ENCODE measurements at regions of chr16 and their contacts with region 1.

Region 1: DNA sequence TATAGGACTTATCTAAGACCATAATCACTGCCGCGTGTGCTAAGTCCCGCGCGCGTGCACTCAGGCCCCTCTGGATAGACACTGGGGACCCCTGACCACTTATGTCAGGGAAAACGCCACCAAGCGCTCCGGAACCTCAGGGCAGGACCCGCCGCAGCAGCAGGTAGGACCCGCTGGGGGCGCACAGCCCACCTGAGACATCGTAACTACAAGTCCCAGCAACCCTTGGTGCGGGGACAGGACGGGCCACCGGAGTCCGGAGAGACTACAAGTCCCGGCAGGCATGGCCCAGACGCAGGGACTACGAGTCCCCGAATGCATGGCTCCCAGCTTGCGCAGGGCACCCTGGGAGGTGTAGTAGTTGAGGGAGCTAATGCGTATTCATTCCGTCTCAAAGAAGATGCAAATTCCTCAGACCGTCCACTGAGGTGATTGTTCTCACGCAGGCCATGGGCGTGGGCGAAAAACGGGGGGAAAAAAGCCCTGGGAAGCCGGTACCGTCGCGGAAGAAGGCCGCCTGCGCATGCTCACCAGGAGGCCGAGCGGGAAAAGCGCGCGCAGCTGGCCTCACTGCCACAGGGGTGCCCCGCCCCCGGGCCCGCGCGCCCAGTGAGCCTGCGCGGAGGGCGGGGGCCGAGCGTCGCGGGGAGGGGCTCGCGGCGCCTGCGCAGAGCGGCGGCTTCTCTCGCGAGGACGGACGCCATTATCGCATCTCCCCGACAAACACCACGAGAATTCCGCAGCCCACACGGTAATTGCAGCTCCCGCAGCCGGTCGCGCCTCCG is at the start of gene BANP:
- DNase-seq: peak; percentile 95
- ATAC-seq: peak; percentile 93
- H3K4me3 Mint-ChIP-seq: peak within 1 kb of the TSS; percentile 97
- H3K27ac Mint-ChIP-seq: peak within 1 kb of the TSS; percentile 100
- H3K4me1 Mint-ChIP-seq: peaks cover 69% of the 10 kb centered on the region
- H3K27me3 Mint-ChIP-seq: no peaks in the 10 kb centered on the region
- CTCF ChIP-seq: no peak
- total RNA-seq, gene BANP: 62.8 and 72.3 TPM in 2 replicates

Region 2: DNA sequence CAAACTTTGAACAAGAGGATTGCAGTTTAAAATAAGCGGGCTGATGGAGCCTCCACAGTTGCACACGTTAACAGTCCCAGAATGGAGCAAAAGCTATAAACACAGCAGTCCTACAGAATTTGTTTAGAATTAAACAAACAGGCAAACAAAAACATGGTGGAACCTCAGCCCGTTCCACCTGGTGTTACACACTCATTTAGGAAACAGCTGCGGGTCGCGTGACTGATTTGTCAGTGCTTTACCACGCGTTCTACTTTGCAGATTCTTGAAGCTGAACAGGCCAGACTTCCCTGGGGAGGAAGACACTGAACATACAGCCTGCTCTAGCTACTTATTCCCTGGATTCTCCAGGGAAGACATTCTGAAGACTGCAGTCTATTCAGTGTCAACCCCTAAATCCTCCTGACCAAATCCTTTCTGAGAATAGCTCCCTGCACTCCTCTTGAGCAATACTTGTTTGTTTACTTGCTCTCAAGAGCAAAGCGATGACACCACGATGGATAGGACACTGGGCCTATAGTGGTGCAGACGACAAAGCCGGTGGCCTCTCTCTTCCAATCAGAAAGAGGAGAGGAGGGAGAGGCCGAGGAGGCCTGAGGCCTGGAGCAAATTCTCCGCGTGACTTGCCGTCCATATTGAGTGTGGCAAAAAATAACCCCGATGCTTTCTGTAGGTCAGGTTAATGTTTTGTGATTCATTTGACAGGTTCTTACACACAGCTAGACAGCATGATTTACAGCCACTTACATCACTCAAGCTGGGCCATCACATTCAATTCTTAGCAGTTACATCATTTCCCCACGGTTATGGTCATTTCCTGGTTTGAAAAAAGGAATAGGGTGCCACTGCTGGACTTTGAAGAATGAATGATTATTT is 562.8 kb before region 1 on chr16:
- CTCF ChIA-PET with region 1: no interaction called
- POLR2A ChIA-PET with region 1: no interaction called
- intact Hi-C with region 1: loop called (anchors 1 kb)
- DNase-seq: peak; percentile 59
- ATAC-seq: peak; percentile 62
- H3K4me3 Mint-ChIP-seq: peak overlapping the region; percentile 70
- H3K27ac Mint-ChIP-seq: peak overlapping the region; percentile 98
- H3K4me1 Mint-ChIP-seq: peaks cover 52% of the 10 kb centered on the region
- H3K27me3 Mint-ChIP-seq: peaks cover 2% of the 10 kb centered on the region
- CTCF ChIP-seq: no peak

Region 3: DNA sequence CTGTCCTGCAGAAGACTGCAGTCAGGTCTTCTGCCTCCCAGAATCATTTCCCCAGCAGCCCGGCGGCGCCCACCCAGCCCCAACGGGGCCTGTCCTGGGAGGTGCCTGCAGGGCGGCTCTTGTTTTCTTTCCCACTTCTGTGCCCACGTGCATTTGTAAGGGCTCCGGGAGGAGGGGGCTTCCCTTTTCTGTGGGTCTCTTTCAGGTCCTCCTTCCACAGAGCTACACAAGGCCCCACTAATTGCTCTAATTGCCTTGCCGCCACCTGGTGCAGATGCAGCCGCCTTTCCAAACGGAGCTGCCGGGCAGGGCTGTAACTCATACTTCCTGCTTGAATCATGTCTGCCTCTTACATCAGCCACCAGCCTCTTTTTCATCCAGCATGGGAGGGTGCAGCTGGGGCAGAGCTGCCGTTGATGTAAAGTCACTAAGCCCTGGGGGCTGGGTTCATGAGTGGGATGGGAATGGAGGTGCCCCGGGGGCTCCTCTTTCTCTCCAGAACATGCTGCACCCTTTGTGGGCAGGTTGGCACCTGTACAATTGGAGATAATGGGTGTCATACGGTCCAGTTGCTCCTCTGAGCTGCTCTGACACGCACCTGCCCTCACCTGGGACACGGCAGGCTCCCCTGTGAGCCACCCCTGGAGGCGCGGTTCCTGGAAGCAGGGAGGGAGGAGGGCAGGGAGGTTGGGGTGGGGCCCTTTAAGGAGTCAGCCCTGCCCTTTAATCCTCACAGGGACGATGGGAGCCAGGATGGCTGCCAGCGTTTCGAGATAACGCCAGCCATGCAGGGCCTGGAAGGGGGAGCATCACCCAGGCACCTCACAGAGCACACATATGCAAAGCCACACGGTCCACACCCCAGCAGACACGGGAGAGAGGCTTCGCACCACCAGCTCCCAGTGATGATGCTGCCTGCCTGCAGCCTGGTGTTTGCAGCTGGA is 144.1 kb before region 1 on chr16:
- CTCF ChIA-PET with region 1: no interaction called
- POLR2A ChIA-PET with region 1: interaction called, 14 read pairs
- intact Hi-C with region 1: loop called (anchors 1 kb)
- DNase-seq: peak; percentile 55
- ATAC-seq: peak; percentile 43
- H3K4me3 Mint-ChIP-seq: peak overlapping the region; percentile 75
- H3K27ac Mint-ChIP-seq: peak overlapping the region; percentile 95
- H3K4me1 Mint-ChIP-seq: peaks cover 74% of the 10 kb centered on the region
- H3K27me3 Mint-ChIP-seq: no peaks in the 10 kb centered on the region
- CTCF ChIP-seq: no peak

Region 4: DNA sequence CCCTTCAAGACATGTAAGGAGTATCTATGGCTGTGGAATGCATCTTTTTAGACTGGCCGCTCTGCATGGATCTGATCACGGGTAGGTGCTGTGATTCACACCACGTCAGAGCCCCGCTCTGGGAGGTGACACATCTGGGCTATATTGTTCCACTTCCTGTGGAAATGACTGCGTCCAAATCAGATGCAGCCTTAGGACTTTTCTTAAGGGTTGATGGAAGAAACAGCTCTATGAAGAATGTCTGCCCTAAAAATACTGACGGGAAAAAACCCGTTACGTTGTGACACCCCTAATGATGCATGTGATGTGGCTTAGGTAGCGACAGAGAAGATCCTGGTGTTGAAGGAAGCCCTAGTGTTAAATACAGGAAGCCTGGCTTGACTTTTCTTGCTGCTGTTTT is 12.4 kb after region 1 on chr16:
- CTCF ChIA-PET with region 1: no interaction called
- POLR2A ChIA-PET with region 1: interaction called, 8 read pairs
- intact Hi-C with region 1: loop called (anchors 1 kb)
- DNase-seq: no peak
- ATAC-seq: peak; percentile 73
- H3K4me3 Mint-ChIP-seq: peak overlapping the region; percentile 32
- H3K27ac Mint-ChIP-seq: peak overlapping the region; percentile 79
- H3K4me1 Mint-ChIP-seq: peaks cover 79% of the 10 kb centered on the region
- H3K27me3 Mint-ChIP-seq: no peaks in the 10 kb centered on the region
- CTCF ChIP-seq: no peak

Region 5: GRCh38 chr16:88452482-88453216 is 501.7 kb after region 1 on chr16:
- CTCF ChIA-PET with region 1: no interaction called
- POLR2A ChIA-PET with region 1: interaction called, 5 read pairs
- intact Hi-C with region 1: loop called (anchors 1 kb)
- DNase-seq: peak; percentile 100
- ATAC-seq: peak; percentile 71
- H3K4me3 Mint-ChIP-seq: peak overlapping the region; percentile 87
- H3K27ac Mint-ChIP-seq: peak overlapping the region; percentile 80
- H3K4me1 Mint-ChIP-seq: peaks cover 57% of the 10 kb centered on the region
- H3K27me3 Mint-ChIP-seq: no peaks in the 10 kb centered on the region
- CTCF ChIP-seq: no peak

Region 6: DNA sequence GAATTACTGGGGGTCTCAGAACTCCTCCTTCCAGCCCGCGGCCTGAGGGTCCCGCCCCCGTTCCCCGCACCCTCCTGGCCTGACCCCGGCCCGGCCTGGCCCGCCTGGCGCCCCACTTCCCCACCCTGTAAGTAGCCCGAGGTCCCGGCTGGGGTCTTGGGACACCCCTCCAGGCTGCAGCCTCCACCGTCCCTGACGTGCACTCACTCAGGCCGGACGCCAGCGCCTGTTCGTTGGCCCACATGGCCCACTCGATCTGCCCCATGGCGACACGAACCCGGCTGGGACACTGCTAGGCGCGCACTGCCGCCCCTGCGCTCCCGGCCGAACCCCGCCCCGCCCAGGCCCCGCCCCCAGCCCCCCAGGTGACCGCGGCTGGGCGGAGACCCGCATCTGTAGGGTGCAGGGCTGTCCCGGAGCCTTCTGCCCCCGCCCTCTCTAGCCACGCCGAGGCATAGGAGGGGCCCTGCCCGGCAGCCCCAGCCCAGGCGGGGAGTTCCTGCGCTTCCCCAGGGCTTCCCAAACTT is 699.9 kb after region 1 on chr16 and contains the start of gene CYBA:
- CTCF ChIA-PET with region 1: no interaction called
- POLR2A ChIA-PET with region 1: no interaction called
- intact Hi-C with region 1: loop called (anchors 2 kb)
- DNase-seq: no peak
- ATAC-seq: peak; percentile 81
- H3K4me3 Mint-ChIP-seq: peak within 1 kb of the TSS; percentile 93
- H3K27ac Mint-ChIP-seq: peak within 1 kb of the TSS; percentile 93
- H3K4me1 Mint-ChIP-seq: peaks cover 50% of the 10 kb centered on the region
- H3K27me3 Mint-ChIP-seq: no peaks in the 10 kb centered on the region
- CTCF ChIP-seq: no peak
- total RNA-seq, gene CYBA: 432 and 456 TPM in 2 replicates

Measured in activated B cell treated with CpG ODN at 0.5 μM for 24 hours (primary cell).